AG04449 (cell line): ENCODE measurements at regions of chr2 and their contacts with region 1.

Region 1: GRCh38 chr2:177489719-177490301 is 97.2 kb downstream of the AGPS start:
- DNase-seq: no peak
- H3K4me3 ChIP-seq: no peak overlapping the region
- CTCF ChIP-seq: peak; percentile 36

Region 2: DNA sequence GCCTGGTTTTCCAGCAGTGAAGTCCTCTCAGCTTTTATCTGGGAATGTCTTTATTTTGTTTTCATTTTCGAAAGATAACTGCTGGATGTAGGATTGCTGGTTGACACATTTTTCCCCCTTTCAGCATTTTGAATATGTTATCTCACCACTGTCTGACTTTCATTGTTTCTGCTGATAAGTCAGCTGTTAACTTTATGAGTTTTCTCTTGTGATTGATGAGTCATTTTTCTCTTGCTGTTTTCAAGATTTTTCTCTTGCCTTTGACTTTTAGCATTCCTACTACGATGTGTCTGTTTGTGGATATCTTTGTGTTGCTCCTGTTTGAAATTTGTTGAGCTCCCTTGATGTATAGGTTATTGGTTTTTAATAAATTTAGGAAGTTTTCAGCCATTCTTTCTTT is 11.8 kb before region 1 on chr2:
- CTCF ChIA-PET with region 1: interaction called, 22 read pairs
- POLR2A ChIA-PET with region 1: no interaction called
- DNase-seq: no peak
- H3K4me3 ChIP-seq: no peak overlapping the region
- CTCF ChIP-seq: no peak

Region 3: GRCh38 chr2:177501186-177501585 is 11.4 kb after region 1 on chr2:
- CTCF ChIA-PET with region 1: interaction called, 22 read pairs
- POLR2A ChIA-PET with region 1: no interaction called
- DNase-seq: no peak
- H3K4me3 ChIP-seq: no peak overlapping the region
- CTCF ChIP-seq: no peak

Region 4: GRCh38 chr2:177519534-177520355 is 29.9 kb after region 1 on chr2:
- CTCF ChIA-PET with region 1: interaction called, 15 read pairs
- POLR2A ChIA-PET with region 1: no interaction called
- DNase-seq: no peak
- H3K4me3 ChIP-seq: no peak overlapping the region
- CTCF ChIP-seq: no peak

Region 5: DNA sequence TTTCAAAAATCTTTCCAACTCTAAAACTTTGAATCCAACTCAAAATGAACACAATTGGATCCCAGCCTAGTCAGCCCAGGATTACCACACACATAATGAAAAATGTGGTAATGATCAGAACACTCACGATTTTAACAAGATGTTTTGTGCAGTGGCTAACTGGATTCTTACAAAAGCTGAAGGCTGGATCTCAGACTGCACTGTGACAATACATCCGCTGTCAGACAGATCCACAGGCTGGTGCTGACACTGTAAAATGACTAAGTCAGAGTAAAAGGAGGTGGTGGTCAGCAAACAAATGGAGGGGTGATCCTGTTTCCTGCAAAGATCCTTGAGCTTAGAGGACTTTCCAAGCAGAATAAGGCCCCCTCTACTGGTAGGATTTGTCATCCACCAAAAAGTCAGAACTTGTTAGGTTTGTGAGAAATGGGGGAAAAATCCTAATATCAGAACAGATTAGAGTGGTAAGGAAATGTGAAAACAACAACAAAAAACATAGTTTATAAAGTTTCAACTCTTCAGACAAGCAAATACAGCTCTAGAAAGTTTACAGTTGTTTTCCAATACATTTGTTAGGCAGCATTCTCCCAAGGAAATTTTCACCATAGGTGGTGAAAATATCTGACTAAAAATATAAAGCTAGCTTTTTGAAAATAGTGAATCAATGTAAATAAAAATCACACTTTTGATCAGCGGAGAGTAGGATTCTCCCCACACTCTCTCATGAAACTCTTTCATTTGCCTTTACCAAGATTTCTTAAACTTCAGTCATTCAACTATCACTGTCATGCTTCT is 114.7 kb after region 1 on chr2:
- CTCF ChIA-PET with region 1: interaction called, 40 read pairs
- POLR2A ChIA-PET with region 1: no interaction called
- DNase-seq: peak; percentile 38
- H3K4me3 ChIP-seq: peak overlapping the region; percentile 25
- CTCF ChIP-seq: peak; percentile 74

Region 6: DNA sequence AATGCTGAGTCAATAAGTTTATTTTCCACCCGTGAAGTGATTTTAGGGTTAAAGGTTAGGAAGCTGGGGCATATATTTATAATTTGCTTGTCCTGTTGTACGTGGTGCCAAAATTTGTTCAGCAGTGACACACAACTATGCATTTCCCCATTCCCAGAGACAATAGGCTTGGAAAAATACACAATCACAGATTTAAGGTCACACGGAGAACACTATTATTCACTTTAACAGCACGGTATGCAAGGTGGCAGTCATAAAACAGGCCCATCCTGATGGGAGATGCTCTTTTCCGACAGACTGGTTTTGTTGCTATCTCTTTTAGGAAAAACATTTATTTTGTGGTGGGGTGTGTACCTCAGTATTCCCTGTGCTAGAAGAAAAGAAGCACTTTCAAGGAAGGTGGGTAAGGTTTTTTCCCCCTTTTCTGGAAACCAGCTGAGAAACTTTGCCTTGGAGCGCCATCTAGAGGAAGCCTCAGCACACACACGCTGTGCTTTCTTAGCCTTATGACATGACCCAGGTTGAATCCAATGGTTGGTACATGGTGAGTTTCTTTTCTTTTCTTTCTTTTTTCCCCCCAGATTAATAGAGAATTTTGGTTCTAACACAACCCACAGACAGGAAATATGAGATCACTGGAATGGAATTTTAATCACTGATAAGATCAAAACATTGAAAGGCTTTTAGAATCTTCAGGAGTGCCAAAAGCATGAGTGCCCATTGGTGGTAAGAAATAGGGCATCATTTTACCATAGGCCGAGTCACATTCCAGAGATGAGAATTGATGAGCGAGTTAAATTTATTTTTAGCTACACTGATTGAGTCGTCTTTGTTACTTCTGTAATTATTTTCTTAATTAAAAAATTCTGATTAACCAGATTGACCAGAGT is 234.8 kb after region 1 on chr2:
- CTCF ChIA-PET with region 1: interaction called, 35 read pairs
- POLR2A ChIA-PET with region 1: no interaction called
- DNase-seq: no peak
- H3K4me3 ChIP-seq: no peak overlapping the region
- CTCF ChIP-seq: peak; percentile 81